Activated naive CD4-positive, alpha-beta T cell treated with anti-CD3 and anti-CD28 coated beads for 36 hours (primary cell): ENCODE measurements at regions of chr11 and their contacts with region 1.

Region 1: DNA sequence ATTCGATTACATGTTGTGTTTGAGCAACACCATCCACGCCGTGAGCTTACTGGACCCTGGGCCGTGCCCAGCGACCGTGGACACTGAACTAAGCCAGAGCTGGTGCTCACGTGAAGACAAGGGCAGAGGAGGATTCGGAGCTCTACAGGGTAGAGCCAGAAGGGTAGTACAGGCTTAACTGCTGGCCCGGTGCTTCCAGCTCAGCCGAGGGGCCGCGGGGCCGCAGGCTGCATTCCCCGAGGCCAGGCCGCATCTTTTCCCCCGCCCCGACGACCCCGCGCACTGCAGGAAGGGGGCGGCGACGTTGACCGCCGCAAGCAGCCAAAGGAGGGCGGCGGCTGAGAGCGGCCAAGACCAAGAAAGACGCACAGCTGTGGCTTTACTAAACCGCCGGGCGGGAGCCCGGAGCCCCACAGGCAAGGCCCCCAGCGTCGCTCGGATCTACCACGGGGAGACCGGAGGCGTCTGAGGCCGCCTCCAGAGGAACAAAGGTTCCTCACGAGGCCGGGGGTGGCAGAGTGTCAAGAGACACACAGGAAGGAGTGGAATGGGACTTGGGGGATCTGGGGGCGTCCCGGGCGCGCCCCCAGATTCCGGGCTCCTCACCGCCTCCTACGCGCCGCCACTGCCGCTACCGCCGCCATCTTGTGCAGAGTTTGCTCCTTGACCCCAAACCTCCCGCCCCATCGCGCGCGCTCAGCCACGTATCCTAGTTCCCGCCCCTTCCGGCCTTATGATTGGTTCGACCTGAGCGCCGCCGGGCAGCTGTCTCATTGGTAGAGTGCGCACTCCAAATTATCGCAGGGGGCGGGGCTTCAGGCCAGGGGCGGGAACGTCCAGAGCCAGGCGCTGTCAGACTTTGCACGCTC is at the start of gene GANAB:
- DNase-seq: peak; percentile 100
- H3K4me3 Mint-ChIP-seq: peak within 1 kb of the TSS; percentile 99
- H3K27ac Mint-ChIP-seq: peak within 1 kb of the TSS; percentile 95
- H3K4me1 Mint-ChIP-seq: peaks cover 35% of the 10 kb centered on the region
- H3K27me3 Mint-ChIP-seq: no peaks in the 10 kb centered on the region
- total RNA-seq, gene GANAB: 221 to 230 TPM

Region 2: DNA sequence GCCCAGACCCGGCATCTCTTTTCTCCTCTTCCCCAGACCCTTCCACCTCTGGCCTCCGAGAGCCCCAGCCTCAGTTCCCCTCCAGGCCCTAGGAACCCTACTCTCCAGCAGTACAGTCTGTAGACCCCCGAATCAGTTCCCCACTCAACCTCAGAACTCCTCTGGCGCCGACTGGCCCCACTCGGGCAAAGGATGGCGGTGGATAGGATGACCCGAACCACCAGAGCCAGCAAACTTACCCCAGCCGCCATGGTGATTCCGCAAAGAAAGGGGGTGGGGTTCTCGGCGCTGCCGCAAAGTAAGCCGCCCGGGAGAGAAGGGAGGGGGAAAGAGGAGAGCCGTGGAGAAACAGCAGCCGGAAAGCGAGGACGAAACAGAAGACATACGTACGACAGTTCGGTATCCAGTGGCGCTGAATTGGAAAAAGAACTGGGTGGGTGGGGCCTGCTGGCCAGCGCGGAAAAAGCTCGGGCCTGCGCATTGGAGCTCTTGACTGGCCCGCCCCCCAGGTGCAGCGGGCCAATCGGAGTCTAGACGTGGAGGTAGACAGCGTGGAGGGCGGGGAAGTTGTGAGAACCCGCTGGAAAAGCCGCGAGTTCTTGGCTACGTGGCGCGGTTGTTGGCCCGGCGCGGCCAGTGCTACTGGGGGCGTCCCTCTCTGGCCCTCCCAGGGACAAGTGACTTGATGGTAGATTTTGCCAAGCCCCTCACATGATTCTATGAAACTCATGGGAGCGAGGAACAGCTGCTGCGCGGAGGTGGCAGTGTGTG is 72.4 kb before region 1 on chr11 and contains the start of gene EEF1G:
- CTCF ChIA-PET with region 1: interaction called, 3 read pairs
- intact Hi-C with region 1: loop called (anchors 2 kb)
- DNase-seq: peak; percentile 99
- H3K4me3 Mint-ChIP-seq: peak within 1 kb of the TSS; percentile 95
- H3K27ac Mint-ChIP-seq: peak within 1 kb of the TSS; percentile 97
- H3K4me1 Mint-ChIP-seq: peaks cover 44% of the 10 kb centered on the region
- H3K27me3 Mint-ChIP-seq: no peaks in the 10 kb centered on the region
- total RNA-seq, gene EEF1G: 2,282 to 2,440 TPM

Region 3: GRCh38 chr11:62612366-62613290 is 33.6 kb before region 1 on chr11 and contains the starts of genes EML3 and ROM1:
- CTCF ChIA-PET with region 1: interaction called, 10 read pairs
- intact Hi-C with region 1: loop called (anchors 1 kb)
- DNase-seq: peak; percentile 84
- H3K4me3 Mint-ChIP-seq: peak within 1 kb of the TSS; percentile 99
- H3K27ac Mint-ChIP-seq: peak within 1 kb of the TSS; percentile 98
- H3K4me1 Mint-ChIP-seq: peaks cover 54% of the 10 kb centered on the region
- H3K27me3 Mint-ChIP-seq: no peaks in the 10 kb centered on the region
- total RNA-seq, gene EML3: 81.8 to 97.1 TPM
- total RNA-seq, gene ROM1: 0.52 to 1.0 TPM

Region 4: GRCh38 chr11:62621567-62622470 is 24.4 kb before region 1 on chr11 and contains the start of gene B3GAT3:
- CTCF ChIA-PET with region 1: interaction called, 3 read pairs
- intact Hi-C with region 1: loop called (anchors 1 kb)
- DNase-seq: peak; percentile 97
- H3K4me3 Mint-ChIP-seq: peak within 1 kb of the TSS; percentile 89
- H3K27ac Mint-ChIP-seq: peak within 1 kb of the TSS; percentile 93
- H3K4me1 Mint-ChIP-seq: peaks cover 23% of the 10 kb centered on the region
- H3K27me3 Mint-ChIP-seq: no peaks in the 10 kb centered on the region
- total RNA-seq, gene B3GAT3: 43.1 to 45.7 TPM

Region 5: DNA sequence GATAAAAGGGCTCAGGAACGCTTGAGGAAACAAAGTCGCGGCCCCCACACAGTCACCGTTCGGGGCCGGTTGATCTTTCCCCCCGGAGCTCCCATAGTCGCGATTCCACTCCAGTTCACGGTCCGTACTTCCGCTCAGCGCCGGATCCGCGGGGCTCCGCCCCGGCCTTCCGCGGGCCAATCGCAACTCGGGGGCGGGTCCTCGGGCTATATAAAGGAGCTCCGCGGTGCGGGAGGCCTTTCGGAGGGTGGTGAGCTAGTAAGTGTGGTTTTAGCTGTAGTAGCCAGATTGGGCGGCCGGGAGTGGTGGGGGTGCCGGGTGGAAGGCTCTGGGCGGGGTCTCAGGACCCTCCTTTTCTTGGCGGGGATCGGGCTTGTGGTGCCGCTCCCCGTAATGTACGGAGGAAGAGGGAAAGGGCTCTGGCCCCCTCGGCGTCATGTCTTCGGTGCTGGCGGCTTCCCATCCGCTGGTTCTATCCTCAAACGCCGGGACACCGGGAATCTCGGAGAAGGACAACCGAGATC is 18.9 kb after region 1 on chr11 and contains the starts of genes C11orf98 and CSKMT:
- CTCF ChIA-PET with region 1: interaction called, 8 read pairs
- intact Hi-C with region 1: loop called (anchors 2 kb)
- DNase-seq: peak; percentile 96
- H3K4me3 Mint-ChIP-seq: peak within 1 kb of the TSS; percentile 98
- H3K27ac Mint-ChIP-seq: peak within 1 kb of the TSS; percentile 88
- H3K4me1 Mint-ChIP-seq: peaks cover 42% of the 10 kb centered on the region
- H3K27me3 Mint-ChIP-seq: no peaks in the 10 kb centered on the region
- total RNA-seq, gene C11orf98: 73.5 to 76.5 TPM
- total RNA-seq, gene CSKMT: 35.2 to 44.0 TPM

Region 6: GRCh38 chr11:63459586-63459985 is 813.4 kb after region 1 on chr11:
- CTCF ChIA-PET with region 1: no interaction called
- intact Hi-C with region 1: no loop called
- DNase-seq: no peak
- H3K4me3 Mint-ChIP-seq: no peak overlapping the region
- H3K27ac Mint-ChIP-seq: no peak overlapping the region
- H3K4me1 Mint-ChIP-seq: no peaks in the 10 kb centered on the region
- H3K27me3 Mint-ChIP-seq: peaks cover 2% of the 10 kb centered on the region